Motor neuron (in vitro differentiated cells): ENCODE measurements at regions of chr17 and their contacts with region 1.

Region 1: DNA sequence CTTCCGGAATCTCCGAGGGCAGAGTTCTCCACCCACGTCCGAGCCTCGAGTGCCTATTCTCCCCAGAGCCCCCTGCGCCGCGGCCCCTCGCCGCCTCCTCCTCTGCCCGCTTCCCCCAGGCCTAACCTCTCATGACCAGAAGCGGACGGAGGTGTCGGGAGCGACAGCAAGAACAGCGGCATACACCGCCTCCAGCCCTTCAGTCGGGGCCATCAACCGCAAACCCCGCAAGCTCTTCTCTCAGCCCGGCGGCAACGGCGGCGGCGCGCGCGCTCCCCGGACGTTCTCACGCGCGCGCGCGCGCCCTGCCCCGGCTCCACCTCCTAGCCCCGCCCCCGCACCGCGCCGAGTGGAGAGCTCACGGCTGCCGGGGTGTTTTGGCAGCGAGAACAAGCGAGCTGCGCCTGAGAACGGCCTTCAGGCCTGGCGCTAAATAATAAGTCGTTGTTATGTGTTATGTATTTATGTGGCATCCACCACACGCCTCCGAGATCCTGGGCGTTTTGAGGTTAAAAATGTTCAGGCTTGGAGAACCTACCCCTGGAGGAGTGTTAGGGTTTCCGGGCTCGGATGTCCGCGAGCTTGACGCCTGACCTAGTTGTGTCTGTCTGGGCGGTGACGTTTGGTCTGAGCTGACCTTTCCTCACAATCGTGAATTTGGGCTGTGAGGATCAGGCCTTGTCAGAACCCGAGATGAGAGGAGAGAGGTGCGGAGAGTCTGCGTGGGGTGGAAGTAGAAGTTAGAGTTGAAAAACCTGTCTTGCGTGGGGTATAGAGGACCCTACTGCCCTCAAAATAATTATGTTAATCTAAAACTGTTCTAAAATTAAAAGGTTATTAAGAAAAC is at the start of gene RNFT1:
- ATAC-seq: peak; percentile 88 to 95 (median 92)
- H3K4me3 ChIP-seq: peak within 1 kb of the TSS; percentile 70 to 95 (median 79)
- H3K27ac ChIP-seq: peak within 1 kb of the TSS; percentile 81
- H3K4me1 ChIP-seq: peaks cover 4 to 8% of the 10 kb centered on the region in 2 donors
- total RNA-seq, gene RNFT1: 8.5 to 23.9 (median 10.1) TPM

Region 2: DNA sequence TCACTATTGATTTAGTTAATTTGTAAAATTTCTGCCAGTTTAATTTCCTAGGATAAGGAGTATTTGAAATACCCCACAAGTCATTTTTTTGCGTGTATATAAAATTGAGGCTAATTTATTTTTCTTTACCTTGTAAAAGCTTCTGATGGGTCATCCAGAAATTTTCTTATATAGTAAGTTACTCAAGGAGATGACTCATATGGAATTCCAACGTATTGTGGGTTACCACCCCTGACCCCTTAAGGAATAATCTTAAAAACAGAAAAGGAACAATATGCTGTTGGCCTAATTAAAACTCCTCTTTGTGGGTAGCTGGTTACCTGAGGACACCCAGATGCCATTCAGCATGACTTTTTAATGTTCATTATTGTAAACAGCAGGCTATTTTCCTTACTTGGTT is 100.4 kb after region 1 on chr17:
- in situ Hi-C with region 1: loop called in 1 of 9 experiments (anchors 25 kb)
- ATAC-seq: no peak
- H3K4me3 ChIP-seq: no peak overlapping the region
- H3K27ac ChIP-seq: no peak overlapping the region
- H3K4me1 ChIP-seq: no peaks in the 10 kb centered on the region

Region 3: GRCh38 chr17:60106220-60107059 is 141.7 kb after region 1 on chr17:
- in situ Hi-C with region 1: no loop called
- ATAC-seq: peak in 1 of 8 experiments; percentile 11
- H3K4me3 ChIP-seq: no peak overlapping the region
- H3K27ac ChIP-seq: no peak overlapping the region
- H3K4me1 ChIP-seq: peaks cover 4 to 7% of the 10 kb centered on the region in 2 donors